ENCODE measurements at regions of chr10 and their contacts with region 1.

Region 1: DNA sequence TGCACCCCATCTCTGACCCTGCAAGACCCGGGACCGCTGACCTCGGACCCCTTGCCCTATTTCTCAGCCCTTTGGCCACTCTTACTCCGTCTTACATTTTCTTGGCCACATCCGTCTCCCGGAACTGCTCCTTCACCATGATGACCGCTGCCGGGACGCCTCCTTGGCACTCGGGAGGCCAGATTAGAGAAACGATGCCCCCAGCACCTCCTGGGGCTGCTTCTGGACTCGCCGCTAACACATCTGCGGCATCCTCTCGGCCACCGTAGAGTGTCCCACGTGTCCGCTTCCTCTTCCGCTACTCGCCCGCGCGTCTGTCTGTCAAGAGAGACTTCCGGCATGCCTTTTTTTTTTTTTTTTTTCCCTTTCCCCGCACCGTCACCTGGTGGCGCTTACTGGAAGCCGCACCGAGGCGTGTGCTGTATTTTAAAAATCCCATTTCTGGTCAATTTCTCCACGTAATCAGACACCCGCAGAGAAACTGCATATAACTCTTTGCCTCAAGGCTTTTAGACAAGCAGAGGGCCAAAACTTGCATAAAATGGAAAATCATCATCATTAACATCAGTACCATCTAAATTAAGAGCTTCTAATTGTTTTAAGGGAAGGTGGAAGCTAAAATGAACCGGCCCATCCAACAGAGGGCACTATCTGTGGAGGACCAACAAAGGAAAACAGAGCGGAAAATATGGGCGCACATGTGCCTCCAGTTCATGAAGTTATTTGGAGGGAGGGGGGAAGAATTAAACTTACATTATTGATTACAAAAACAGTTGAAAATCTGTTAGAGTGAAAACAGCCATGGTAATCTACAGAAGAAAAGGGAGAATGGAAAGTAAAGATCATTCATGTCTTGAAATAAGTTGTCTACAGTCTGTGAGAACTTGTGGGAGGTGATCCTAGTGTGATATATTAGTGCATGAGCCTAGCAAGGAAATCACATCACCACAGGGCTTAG is at the start of gene POLR3A:
- DNase-seq: peak; percentile 98

Region 2: DNA sequence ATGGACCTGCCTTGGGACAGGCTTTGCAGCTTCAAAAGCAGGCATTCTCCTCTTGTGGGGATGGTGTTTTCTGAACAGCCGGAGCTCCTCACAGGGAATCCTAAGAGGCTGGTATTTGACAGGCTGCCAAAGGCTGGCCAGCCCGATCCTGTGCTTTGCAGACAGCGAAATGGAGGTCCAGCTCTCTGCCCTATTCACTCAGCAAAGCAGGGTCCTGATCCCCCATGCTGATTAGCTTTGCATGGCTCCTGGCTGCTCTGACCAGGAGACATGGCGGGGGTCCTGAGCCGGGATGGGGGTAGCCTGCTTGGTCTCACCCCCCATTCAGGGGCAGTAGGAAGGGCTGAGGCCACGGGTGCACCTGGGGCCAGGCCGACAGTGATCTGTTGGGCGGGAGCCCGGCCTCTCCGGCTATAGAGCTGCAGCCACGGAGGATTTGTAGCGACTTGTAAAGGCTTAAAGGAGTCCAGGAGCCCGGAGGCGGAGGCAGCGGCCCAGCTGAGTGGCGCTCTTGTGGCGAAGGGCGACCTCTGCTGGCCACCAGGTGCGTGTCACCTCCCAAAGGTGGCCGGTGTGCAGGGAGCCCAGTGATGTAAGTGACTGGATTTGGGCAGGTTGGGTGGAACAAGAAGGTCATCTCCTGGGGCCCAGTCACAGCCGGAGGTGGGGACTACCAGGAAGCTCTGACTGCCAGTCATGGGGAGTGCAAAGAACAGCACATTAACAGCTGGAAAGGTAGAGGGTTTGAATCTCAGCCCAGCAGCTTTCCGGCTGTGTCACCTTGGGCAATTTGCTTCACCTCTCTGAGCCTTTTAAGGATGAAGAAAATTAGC is 1165.8 kb after region 1 on chr10:
- in situ Hi-C with region 1: loop called (anchors 25 kb)
- DNase-seq: peak; percentile 92

Measured in KBM-7 (cell line).